ENCODE measurements at regions of chr1 and their contacts with region 1.

Region 1: DNA sequence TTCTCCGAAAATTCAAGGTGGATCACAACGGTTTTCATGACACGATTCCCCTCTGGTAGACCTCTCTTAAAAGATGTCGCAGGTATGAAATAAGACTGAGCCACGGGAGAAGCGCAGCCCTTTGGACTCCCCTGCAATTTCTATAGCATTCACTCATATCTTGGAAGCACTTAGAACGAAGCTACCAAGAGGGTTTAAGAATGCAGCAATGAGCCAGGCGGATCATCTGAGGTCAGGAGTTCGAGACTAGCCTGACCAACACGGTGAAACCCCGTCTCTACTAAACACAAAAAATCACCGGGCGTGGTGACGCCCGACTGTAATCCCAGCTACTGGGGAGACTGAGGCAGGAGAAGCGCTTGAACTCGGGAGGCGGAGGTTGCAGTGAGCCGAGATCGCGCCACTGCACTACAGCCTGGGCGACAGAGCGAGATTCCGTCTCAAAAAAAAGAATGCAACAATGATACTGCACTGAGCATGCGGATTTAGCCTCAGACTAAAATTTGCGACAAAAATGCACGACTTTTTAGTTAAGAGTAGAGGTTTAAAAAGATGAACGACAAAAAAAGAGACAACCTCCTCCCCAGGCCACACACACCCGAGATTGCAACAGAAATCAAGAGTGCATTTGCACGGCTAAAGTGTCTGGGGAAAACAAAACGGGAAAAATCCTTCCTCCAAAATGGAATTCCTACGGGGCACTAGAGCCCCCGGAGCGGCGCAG is 743 bp downstream of the TOMM20 start:
- DNase-seq: peak in 1 of 5 donors; percentile 5
- H3K4me3 ChIP-seq: peak overlapping the region; percentile 98
- H3K4me3 Mint-ChIP-seq: peak overlapping the region; percentile 93 to 99 (median 97)
- H3K27ac ChIP-seq: peak overlapping the region; percentile 89
- H3K27ac Mint-ChIP-seq: peak overlapping the region; percentile 94 to 99 (median 98)
- H3K4me1 ChIP-seq: peaks cover 48% of the 10 kb centered on the region
- H3K4me1 Mint-ChIP-seq: peaks cover 45 to 56% (median 53%) of the 10 kb centered on the region in 3 donors
- H3K27me3 ChIP-seq: no peaks in the 10 kb centered on the region
- H3K27me3 Mint-ChIP-seq: no peaks in the 10 kb centered on the region

Region 2: GRCh38 chr1:234925440-234926263 is 202.2 kb before region 1 on chr1:
- CTCF ChIA-PET with region 1: no interaction called
- POLR2A ChIA-PET with region 1: no interaction called
- DNase-seq: peak in 2 of 5 donors; percentile 17 to 45
- H3K4me3 ChIP-seq: no peak overlapping the region
- H3K4me3 Mint-ChIP-seq: peak overlapping the region; percentile 32 to 88 (median 83)
- H3K27ac ChIP-seq: no peak overlapping the region
- H3K27ac Mint-ChIP-seq: peak overlapping the region; percentile 70 to 94 (median 92)
- H3K4me1 ChIP-seq: peaks cover 41% of the 10 kb centered on the region
- H3K4me1 Mint-ChIP-seq: peaks cover 35 to 47% (median 38%) of the 10 kb centered on the region in 3 donors
- H3K27me3 ChIP-seq: no peaks in the 10 kb centered on the region
- H3K27me3 Mint-ChIP-seq: no peaks in the 10 kb centered on the region

Region 3: DNA sequence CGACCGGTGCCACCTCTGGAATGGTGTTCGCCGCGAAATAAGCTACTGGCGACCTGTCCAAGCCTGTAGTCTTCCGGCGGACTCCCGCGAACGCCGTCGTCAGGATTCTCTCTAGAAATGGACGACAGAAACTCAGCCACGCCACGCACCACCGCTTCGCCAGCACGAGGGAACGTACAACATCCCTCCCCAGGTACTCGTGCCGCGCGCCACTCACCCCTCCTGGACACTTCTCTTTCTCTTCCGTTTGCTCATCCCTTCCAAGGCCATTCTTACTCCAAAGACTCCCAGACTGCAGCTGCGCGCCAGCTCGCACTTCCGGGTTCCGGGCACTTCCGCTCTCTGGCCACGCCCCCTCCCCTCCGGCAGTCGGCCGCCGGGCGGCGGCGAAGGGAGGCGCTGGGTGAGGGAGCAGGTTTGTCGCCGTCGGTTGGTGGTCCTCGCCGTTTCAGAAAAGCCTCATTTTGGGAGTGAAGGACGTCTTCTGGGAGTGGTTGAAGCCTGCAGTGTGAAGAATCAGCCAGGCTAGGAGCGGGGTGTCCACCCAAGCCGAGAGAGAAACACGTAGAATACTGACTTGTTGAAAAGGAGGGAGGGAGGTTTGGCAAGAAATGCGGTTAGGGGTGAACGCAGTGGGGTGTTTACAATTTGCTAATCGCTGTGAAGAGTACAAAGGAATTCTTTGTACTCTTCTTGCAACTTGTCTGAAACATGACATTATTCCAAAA is 33.2 kb after region 1 on chr1 and contains the start of gene RBM34:
- CTCF ChIA-PET with region 1: no interaction called
- POLR2A ChIA-PET with region 1: interaction called, 12 read pairs
- DNase-seq: peak; percentile 90 to 95 (median 92)
- H3K4me3 ChIP-seq: peak within 1 kb of the TSS; percentile 91
- H3K4me3 Mint-ChIP-seq: peak within 1 kb of the TSS; percentile 95 to 98 (median 96)
- H3K27ac ChIP-seq: peak within 1 kb of the TSS; percentile 94
- H3K27ac Mint-ChIP-seq: peak within 1 kb of the TSS; percentile 94 to 99 (median 98)
- H3K4me1 ChIP-seq: peaks cover 45% of the 10 kb centered on the region
- H3K4me1 Mint-ChIP-seq: peaks cover 26 to 28% (median 26%) of the 10 kb centered on the region in 3 donors
- H3K27me3 ChIP-seq: no peaks in the 10 kb centered on the region
- H3K27me3 Mint-ChIP-seq: no peaks in the 10 kb centered on the region
- total RNA-seq, gene RBM34: 121 to 130 TPM